Naive thymus-derived CD4-positive, alpha-beta T cell (primary cell): ENCODE measurements at regions of chr3 and their contacts with region 1.

Region 1: DNA sequence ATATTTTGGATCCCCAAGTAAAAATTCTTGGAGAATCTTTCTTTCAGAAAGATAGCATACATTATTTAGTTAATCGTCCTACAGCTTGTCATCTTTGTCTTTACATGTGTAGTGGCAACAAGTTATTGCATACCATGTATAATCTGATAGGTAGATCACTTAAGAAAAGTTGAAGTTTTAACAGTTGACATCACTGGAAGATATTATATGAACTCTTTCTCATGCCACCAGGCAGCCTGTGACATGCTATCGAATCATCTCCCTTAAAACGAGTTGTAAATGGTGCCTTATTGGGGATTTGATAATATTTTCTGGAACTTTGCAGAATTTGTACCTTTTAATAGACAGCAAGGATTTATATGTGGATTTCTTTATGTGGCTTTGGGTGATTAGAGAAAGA is 8.7 kb downstream of the U2SURP start:
- DNase-seq: no peak
- ATAC-seq: no peak
- H3K4me3 ChIP-seq: no peak overlapping the region
- H3K4me3 Mint-ChIP-seq: peak overlapping the region in 4 of 10 donors; percentile 1 to 69 (median 16)
- H3K27ac ChIP-seq: no peak overlapping the region
- H3K27ac Mint-ChIP-seq: no peak overlapping the region
- H3K4me1 ChIP-seq: peaks cover 3 to 9% of the 10 kb centered on the region in 2 donors
- H3K4me1 Mint-ChIP-seq: peaks cover 44 to 85% (median 79%) of the 10 kb centered on the region in 7 donors
- H3K27me3 ChIP-seq: no peaks in the 10 kb centered on the region
- H3K27me3 Mint-ChIP-seq: no peaks in the 10 kb centered on the region

Region 2: DNA sequence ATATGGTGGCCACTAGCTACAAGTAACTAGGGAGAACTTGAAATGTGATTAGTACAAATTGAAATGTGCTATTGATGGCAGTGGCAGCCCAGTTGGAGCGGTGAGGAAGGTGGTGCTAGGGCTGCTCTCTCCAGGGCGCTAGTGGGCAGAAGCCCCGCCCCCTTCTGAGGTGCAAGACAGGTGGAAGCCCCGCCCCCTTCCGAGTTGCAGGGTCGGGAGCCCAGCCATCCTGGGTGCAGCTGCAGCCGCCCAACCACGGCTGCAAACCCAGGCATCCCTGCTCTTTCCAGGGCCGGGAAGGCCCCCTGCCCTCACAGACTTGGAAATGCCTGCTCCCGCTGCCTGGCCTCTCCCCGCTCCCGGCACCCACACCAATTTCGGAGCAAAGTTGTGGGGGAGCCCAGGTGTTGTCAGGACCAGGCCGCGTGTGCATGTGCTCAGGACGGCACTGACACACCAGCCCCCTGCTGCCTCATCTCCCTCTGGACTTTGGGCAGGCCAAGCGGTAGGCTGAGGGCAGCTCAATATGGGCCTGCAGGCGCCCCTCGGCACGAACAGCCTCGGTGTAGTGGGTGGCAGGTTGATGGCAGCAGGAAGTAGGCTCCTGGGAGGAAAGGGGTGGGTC is 441.5 kb before region 1 on chr3:
- CTCF ChIA-PET with region 1: no interaction called
- POLR2A ChIA-PET with region 1: no interaction called
- intact Hi-C with region 1: no loop called
- DNase-seq: no peak
- ATAC-seq: no peak
- H3K4me3 ChIP-seq: no peak overlapping the region
- H3K4me3 Mint-ChIP-seq: no peak overlapping the region
- H3K27ac ChIP-seq: no peak overlapping the region
- H3K27ac Mint-ChIP-seq: no peak overlapping the region
- H3K4me1 ChIP-seq: peaks cover 0 to 3% of the 10 kb centered on the region in 2 donors
- H3K4me1 Mint-ChIP-seq: peaks cover 7 to 29% (median 17%) of the 10 kb centered on the region in 7 donors
- H3K27me3 ChIP-seq: no peaks in the 10 kb centered on the region
- H3K27me3 Mint-ChIP-seq: no peaks in the 10 kb centered on the region

Region 3: GRCh38 chr3:143031327-143031726 is 21.3 kb after region 1 on chr3:
- CTCF ChIA-PET with region 1: no interaction called
- POLR2A ChIA-PET with region 1: no interaction called
- intact Hi-C with region 1: loop called in 1 of 2 experiments (anchors 2 kb)
- DNase-seq: no peak
- ATAC-seq: no peak
- H3K4me3 ChIP-seq: no peak overlapping the region
- H3K4me3 Mint-ChIP-seq: no peak overlapping the region
- H3K27ac ChIP-seq: no peak overlapping the region
- H3K27ac Mint-ChIP-seq: no peak overlapping the region
- H3K4me1 ChIP-seq: no peaks in the 10 kb centered on the region
- H3K4me1 Mint-ChIP-seq: peaks cover 0 to 9% (median 4%) of the 10 kb centered on the region in 7 donors
- H3K27me3 ChIP-seq: no peaks in the 10 kb centered on the region
- H3K27me3 Mint-ChIP-seq: no peaks in the 10 kb centered on the region

Region 4: GRCh38 chr3:143167969-143168854 is 158.2 kb after region 1 on chr3:
- CTCF ChIA-PET with region 1: no interaction called
- POLR2A ChIA-PET with region 1: no interaction called
- intact Hi-C with region 1: no loop called
- DNase-seq: no peak
- ATAC-seq: no peak
- H3K4me3 ChIP-seq: no peak overlapping the region
- H3K4me3 Mint-ChIP-seq: peak overlapping the region in 7 of 10 donors; percentile 4 to 85 (median 33)
- H3K27ac ChIP-seq: no peak overlapping the region
- H3K27ac Mint-ChIP-seq: peak overlapping the region; percentile 64 to 95 (median 91)
- H3K4me1 ChIP-seq: peaks cover 17 to 63% of the 10 kb centered on the region in 2 donors
- H3K4me1 Mint-ChIP-seq: peaks cover 76 to 98% (median 90%) of the 10 kb centered on the region in 7 donors
- H3K27me3 ChIP-seq: no peaks in the 10 kb centered on the region
- H3K27me3 Mint-ChIP-seq: no peaks in the 10 kb centered on the region